Common myeloid progenitor, CD34-positive (primary cell): ENCODE measurements at regions of chr19 and their contacts with region 1.

Region 1: GRCh38 chr19:51422053-51422448 is 4.6 kb upstream of the SIGLEC10 start:
- DNase-seq: peak; percentile 75 to 82 (median 79)
- H3K4me3 ChIP-seq: peak overlapping the region in 3 of 7 experiments; percentile 33 to 48 (median 36)
- H3K27ac ChIP-seq: no peak overlapping the region
- H3K4me1 ChIP-seq: peaks cover 3 to 47% (median 33%) of the 10 kb centered on the region in 4 experiments
- H3K27me3 ChIP-seq: peaks cover 0 to 3% (median 0%) of the 10 kb centered on the region in 5 experiments

Region 2: DNA sequence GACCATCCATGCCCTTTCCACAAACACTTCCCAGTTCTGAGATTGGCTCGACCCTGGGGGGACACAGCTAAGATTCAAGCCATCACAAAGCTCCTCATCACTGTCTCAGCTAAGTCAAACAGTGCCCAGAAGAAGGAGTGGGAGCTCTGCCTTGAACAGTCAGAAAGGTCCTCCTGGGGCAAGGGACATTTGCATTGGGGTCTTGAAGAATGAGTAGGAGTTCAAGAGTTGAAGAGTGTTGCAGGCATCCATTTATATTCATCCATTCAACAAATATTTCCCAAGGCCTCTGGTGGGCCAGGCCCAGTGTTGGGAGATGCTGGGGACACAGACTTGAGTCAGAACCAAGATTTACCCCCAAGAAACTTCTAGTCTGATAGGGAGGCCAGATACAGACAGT is 104.1 kb before region 1 on chr19:
- CTCF ChIA-PET with region 1: no interaction called
- POLR2A ChIA-PET with region 1: no interaction called
- DNase-seq: no peak
- H3K4me3 ChIP-seq: no peak overlapping the region
- H3K27ac ChIP-seq: no peak overlapping the region
- H3K4me1 ChIP-seq: peaks cover 0 to 11% (median 10%) of the 10 kb centered on the region in 4 experiments
- H3K27me3 ChIP-seq: peaks cover 0 to 13% (median 5%) of the 10 kb centered on the region in 5 experiments

Region 3: DNA sequence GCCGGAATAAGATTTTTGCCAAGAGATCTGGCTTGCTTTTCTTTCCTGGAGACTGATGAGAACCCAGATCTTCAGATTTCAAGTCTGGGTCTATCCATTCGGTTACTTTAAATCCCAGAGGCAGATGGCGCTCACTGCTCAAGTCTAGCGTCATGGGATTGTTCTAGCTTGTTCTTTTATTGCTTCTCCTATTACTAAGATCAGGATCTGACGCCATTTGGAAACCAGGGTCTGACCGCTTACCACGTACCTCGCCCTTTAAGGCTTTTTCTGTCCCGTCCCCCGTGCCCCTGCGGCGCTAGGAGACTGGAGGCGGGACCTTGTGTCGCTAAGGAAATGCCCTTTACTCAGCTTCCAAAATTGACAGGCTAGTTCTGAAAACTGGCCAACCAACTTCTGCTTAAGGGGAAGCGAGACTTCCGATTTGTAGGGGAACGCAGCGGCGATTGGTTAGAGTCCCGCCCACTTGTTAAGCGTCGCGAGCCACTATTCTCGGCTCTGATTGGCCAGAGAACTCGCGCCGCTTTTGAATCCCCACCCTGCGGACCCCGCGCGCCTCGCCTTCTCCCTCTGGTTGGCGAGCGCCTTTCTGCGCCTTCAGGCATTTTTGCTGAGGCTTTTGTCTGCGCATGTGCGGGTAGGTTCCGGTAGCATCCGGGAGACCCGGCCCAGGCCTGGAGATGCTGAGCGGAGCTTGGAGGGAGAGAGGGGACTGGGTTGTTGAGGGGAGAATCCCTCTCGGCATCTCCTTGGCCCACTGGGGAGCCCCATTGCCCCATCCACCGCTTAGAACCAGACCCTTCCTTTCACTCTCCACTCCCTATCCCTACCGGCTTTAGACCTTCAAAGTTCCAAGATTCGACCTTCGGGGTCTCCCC is 27.9 kb before region 1 on chr19:
- CTCF ChIA-PET with region 1: interaction called, 101 read pairs
- POLR2A ChIA-PET with region 1: interaction called, 4 read pairs
- DNase-seq: peak; percentile 98 to 99 (median 99)
- H3K4me3 ChIP-seq: peak overlapping the region; percentile 25 to 81 (median 66)
- H3K27ac ChIP-seq: peak overlapping the region; percentile 51 to 85
- H3K4me1 ChIP-seq: peaks cover 0 to 28% (median 24%) of the 10 kb centered on the region in 4 experiments
- H3K27me3 ChIP-seq: no peaks in the 10 kb centered on the region

Region 4: DNA sequence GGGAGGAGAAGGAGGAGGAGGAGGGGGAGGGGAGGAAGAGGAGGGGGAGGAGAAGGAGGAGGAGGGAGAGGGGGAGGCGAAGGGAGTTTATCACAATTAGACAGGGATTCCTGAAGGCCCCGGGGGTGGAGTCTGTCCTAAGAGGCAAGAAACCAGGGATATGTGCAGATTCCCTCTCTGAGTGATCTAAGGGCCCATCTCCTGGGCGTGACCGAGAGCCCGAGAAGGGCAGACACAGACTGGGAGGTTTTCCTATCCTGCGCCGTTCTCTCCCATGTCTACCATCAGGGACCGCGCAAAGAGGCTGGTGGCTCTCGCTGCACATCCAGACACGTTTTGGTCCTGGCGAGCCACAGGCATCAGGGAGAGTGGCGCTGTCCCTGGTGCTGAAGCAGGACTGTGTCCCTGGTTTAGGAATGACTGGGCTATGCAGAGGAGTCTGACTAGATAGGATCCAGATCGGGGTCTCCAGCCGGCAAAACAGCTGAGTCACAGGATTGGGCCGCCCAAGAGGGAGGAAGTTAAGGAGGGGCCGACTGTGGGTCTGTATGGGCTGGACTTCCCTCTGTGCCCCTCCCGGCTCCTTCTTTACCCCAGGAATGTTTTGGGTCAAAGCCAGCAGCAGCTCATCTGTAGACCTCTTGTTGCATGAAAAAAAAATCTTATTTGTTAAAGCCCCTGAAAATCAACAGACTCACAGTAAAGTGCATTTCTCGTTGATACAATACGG is 131.1 kb after region 1 on chr19:
- CTCF ChIA-PET with region 1: no interaction called
- POLR2A ChIA-PET with region 1: no interaction called
- DNase-seq: peak; percentile 46 to 58 (median 55)
- H3K4me3 ChIP-seq: no peak overlapping the region
- H3K27ac ChIP-seq: no peak overlapping the region
- H3K4me1 ChIP-seq: peaks cover 3 to 26% (median 24%) of the 10 kb centered on the region in 4 experiments
- H3K27me3 ChIP-seq: peaks cover 0 to 32% (median 8%) of the 10 kb centered on the region in 5 experiments